Psoas muscle (tissue), 8 donors: ENCODE measurements at regions of chr10 and their contacts with region 1.

Region 1: DNA sequence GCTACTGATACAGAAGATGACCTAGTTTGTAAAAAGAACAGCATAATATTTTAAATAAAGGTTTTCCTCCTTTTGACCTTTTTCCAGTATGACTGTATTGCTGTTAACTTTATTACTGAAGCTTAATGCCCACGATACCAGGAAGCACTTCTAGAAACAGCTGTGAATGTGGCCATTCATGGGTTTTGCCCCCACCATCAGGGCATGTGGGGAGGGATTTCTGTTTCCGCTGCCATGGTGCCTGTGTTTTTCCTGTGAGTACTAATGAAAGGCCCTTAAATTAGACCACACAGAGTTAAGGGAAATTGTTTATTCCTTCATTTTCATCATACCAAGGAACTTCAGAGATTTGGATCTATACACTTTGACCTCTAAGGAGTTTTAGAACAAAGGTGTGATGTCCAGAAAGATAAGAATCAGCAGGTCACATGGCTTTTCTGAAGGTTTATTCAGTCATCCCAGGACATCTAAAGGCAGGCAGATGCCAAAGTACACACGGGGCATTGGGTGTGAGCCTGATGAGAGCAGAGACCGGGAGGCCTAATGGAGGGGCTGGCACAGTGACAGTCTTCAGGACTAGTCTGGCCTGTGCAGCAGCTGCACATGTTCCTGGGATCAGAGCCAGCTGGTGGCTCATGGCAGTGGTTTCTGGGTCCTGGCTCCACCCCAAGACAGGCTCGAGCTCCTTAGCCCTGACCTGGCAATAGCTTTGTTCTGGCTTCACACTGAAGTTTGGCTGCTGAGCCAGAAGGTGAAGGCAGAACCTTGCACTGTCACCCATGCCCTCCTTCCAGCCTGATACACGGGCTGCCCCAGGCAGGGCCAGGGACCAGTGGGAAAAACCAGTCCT is 190.9 kb downstream of the REEP3 start:
- DNase-seq: peak; percentile 90 to 97
- ATAC-seq: peak; percentile 88 to 95 (median 92)
- H3K4me3 ChIP-seq: no peak overlapping the region
- H3K27ac ChIP-seq: peak overlapping the region; percentile 87
- H3K4me1 ChIP-seq: peaks cover 50% of the 10 kb centered on the region
- H3K27me3 ChIP-seq: no peaks in the 10 kb centered on the region
- CTCF ChIP-seq: no peak

Region 2: DNA sequence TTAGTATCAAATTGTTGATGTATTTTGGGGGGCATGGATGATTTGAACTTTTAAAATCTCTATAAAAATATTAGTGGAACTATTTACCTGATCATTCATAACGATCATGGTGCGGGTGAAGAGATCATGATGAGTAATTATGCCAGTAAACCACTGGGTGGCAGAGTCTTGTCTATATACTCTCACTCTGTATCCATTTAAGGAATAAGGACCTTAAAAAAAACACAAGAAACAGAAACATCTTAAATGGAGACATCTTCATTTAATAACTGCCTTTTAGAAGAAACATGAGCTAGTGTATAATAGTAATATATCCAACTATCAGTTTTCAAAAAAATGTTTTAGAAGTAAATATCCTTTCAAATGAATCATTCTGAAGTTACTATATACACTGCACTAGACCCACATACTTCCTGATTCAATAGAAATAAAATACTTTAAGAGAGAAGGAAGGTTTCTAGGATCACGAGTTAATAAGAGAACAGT is 494.9 kb before region 1 on chr10:
- intact Hi-C with region 1: loop called in 1 of 2 experiments (anchors 5 kb)
- DNase-seq: no peak
- ATAC-seq: peak; percentile 62 to 88 (median 78)
- H3K4me3 ChIP-seq: no peak overlapping the region
- H3K27ac ChIP-seq: no peak overlapping the region
- H3K4me1 ChIP-seq: peaks cover 3% of the 10 kb centered on the region
- H3K27me3 ChIP-seq: no peaks in the 10 kb centered on the region
- CTCF ChIP-seq: peak; percentile 72

Region 3: GRCh38 chr10:63268798-63269503 is 443.1 kb before region 1 on chr10:
- intact Hi-C with region 1: loop called in 1 of 2 experiments (anchors 5 kb)
- DNase-seq: peak; percentile 65 to 84
- ATAC-seq: peak; percentile 95 to 99 (median 96)
- H3K4me3 ChIP-seq: peak overlapping the region; percentile 86
- H3K27ac ChIP-seq: peak overlapping the region; percentile 98
- H3K4me1 ChIP-seq: peaks cover 14% of the 10 kb centered on the region
- H3K27me3 ChIP-seq: no peaks in the 10 kb centered on the region
- CTCF ChIP-seq: peak; percentile 47

Region 4: DNA sequence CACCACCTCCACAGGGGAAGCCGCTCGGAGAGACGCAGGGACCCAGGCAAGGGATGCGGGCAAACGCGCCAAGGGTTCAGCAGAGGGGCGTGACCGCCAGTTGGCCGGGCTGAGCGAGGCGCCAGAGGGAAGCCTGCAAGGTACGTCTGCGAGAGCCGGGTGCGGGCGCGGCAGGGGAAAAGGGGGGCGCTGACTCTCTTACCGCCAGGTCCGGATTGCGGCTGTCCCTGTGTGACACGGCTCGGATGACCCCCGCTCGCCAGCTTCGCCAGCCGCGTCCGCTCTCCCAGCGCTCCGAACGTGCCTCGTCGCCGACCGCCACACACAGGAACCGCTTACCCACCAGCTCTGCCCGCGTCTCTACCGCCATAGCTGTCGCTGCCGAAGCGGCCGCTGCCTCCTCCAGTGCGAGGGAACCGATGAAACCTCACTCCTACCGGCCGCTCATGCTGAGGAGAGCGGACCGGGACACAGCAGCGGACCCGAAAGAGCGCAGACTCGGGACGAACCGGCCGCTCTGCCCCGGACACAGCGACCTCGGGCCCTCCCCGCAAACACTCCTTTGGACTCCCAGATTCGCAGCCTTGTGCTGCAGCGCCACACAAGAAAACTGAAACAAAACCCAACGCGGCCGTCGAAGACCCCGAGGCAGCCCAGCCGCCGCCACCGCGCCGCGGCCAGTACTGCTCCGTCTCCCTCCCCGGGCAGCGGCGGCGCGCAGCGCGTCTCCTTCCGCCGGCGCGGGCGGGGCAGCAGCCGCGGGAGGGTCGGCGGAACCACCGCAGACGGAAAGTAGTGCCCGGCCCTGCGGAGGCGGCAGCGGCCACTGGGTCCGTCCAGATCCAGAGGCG is 246.6 kb before region 1 on chr10 and contains the start of gene JMJD1C:
- intact Hi-C with region 1: loop called (anchors 5 to 10 kb)
- DNase-seq: peak; percentile 88 to 90
- ATAC-seq: peak; percentile 90 to 93 (median 90)
- H3K4me3 ChIP-seq: peak within 1 kb of the TSS; percentile 81
- H3K27ac ChIP-seq: peak within 1 kb of the TSS; percentile 92
- H3K4me1 ChIP-seq: peaks cover 27% of the 10 kb centered on the region
- H3K27me3 ChIP-seq: no peaks in the 10 kb centered on the region
- CTCF ChIP-seq: peak; percentile 2
- total RNA-seq, gene JMJD1C: 23.3 to 74.4 (median 30.3) TPM

Region 5: GRCh38 chr10:63521416-63522276 is 190.4 kb before region 1 on chr10:
- intact Hi-C with region 1: loop called (anchors 5 to 10 kb)
- DNase-seq: peak; percentile 76 to 86
- ATAC-seq: peak; percentile 84 to 87 (median 86)
- H3K4me3 ChIP-seq: peak overlapping the region; percentile 83
- H3K27ac ChIP-seq: peak overlapping the region; percentile 98
- H3K4me1 ChIP-seq: peaks cover 53% of the 10 kb centered on the region
- H3K27me3 ChIP-seq: no peaks in the 10 kb centered on the region
- CTCF ChIP-seq: no peak

Region 6: GRCh38 chr10:63629363-63630084 is 82.6 kb before region 1 on chr10:
- intact Hi-C with region 1: loop called (anchors 5 kb)
- DNase-seq: peak; percentile 95 to 97
- ATAC-seq: peak; percentile 83 to 88 (median 84)
- H3K4me3 ChIP-seq: peak overlapping the region; percentile 79
- H3K27ac ChIP-seq: peak overlapping the region; percentile 95
- H3K4me1 ChIP-seq: peaks cover 13% of the 10 kb centered on the region
- H3K27me3 ChIP-seq: no peaks in the 10 kb centered on the region
- CTCF ChIP-seq: peak; percentile 64

Region 7: DNA sequence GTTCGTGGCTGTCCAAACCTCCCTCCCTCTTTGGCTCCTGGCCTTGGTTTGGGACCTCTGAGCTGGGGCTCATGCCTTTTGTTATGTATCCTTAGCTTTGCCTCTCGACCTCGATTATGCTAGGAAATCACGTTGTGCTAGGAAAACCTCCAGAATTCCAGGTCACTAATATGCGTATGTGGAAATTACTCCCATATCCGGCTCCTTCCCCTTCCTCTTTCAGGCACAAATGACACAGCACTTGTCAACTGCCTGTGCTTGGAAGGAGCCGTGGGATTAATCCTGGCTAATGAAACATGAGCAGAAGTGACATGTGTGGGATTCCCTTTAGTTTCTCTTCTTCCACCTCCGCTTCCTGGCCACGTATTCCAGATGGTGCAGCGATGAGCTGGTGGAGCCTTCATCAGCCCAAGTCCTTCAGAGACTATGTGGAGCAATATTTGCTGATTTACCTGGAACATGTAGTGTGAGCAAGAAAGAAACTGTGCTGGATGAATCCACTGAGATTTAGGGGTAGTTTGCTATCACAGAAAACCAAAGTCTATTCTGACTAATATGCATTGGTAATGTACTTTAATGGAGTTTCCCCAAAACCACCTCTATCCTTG is 41.7 kb before region 1 on chr10:
- intact Hi-C with region 1: loop called in 1 of 2 experiments (anchors 2 kb)
- DNase-seq: no peak
- ATAC-seq: peak; percentile 79 to 83 (median 80)
- H3K4me3 ChIP-seq: peak overlapping the region; percentile 37
- H3K27ac ChIP-seq: peak overlapping the region; percentile 73
- H3K4me1 ChIP-seq: peaks cover 22% of the 10 kb centered on the region
- H3K27me3 ChIP-seq: no peaks in the 10 kb centered on the region
- CTCF ChIP-seq: no peak

Region 8: GRCh38 chr10:63751836-63752235 is 39.7 kb after region 1 on chr10:
- intact Hi-C with region 1: no loop called
- DNase-seq: no peak
- ATAC-seq: no peak
- H3K4me3 ChIP-seq: no peak overlapping the region
- H3K27ac ChIP-seq: no peak overlapping the region
- H3K4me1 ChIP-seq: no peaks in the 10 kb centered on the region
- H3K27me3 ChIP-seq: no peaks in the 10 kb centered on the region
- CTCF ChIP-seq: no peak

Region 9: DNA sequence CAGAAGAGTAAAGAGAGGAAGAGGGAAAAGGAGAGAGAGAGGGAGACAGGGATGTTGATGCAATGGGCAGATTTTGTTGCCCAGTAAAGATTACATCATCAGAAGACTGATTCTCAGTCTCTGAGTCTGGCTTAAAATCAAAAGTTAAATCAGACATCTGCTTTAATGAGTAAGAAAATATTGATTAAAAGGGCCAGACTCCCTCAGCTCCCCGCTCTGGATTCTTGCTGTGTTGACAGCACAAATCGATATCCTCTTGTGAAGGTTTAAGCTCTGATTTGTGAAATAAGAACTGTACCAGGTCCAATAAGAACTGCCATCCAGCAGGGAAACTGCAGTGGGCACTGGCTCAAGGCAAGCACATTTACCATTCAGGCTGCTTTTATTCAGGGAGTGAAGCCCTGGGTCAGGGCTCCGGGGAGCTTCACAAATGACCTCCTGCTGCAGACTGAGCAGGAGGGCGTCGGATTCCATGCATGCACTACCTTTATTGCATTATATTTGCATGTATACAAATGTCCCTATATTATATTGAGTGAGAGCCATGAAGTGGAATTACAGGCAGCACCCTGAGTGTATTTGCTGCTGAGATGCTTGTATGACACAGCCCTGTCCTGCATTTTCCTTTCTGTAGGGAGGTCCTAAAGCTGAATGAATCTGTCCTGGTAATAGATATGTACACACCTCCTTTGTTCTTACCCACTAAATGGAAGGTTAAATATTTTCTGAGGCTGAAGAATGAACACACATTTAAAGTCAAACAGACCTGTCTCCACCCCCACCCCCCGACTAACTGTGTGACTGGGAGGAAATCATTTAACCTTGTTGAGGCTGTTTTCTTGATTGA is 210.6 kb after region 1 on chr10:
- intact Hi-C with region 1: no loop called
- DNase-seq: no peak
- ATAC-seq: no peak
- H3K4me3 ChIP-seq: no peak overlapping the region
- H3K27ac ChIP-seq: no peak overlapping the region
- H3K4me1 ChIP-seq: no peaks in the 10 kb centered on the region
- H3K27me3 ChIP-seq: no peaks in the 10 kb centered on the region
- CTCF ChIP-seq: no peak